ENCODE measurements at regions of chr5 and their contacts with region 1.

Region 1: DNA sequence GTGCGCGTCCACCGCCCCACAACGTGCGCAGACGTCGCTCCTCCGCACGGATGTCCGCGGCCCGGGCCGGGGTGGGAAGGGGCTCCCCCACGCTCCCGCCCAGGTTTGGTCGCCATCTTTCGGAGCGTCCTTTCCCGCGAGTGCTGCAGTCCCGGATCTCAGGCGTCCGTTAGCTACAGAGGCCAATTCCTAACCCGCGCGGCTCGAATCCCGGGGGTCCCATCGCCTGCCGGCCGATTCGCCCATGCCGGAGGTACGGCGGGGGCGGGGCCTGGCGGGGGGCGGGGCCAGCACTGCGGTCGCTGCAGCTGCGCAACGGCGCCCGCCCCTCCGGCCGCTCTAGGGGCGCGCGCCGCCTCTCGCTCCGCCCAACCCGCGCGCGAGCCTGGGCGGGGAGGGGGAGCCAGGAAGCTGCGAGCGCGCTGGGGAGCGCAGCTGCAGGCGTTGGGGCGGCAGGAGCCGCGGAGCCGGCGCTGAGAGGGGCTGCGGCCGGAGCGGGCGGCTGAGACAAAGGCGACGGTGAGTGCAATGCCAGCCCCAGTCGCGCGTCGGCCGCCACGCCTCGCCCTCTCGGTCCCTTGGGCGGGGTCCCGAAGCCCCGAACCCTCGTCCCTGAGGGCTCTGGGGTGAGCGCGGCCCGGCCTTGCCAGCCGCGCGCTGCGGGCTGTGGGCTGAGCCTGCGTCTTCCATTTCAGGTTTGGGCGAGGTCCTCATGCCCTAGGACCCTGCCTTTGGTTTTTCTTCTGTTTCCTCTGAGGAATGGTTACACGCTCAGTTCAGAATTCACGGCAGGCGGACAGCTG is at the start of gene CDC42SE2:
- DNase-seq: peak; percentile 84 to 92 (median 88)
- ATAC-seq: peak; percentile 95 to 100 (median 99)
- H3K4me3 ChIP-seq: peak within 1 kb of the TSS; percentile 85 to 100 (median 94)
- H3K27ac ChIP-seq: peak within 1 kb of the TSS; percentile 10 to 95 (median 87)
- H3K4me1 ChIP-seq: peaks cover 0 to 58% (median 9%) of the 10 kb centered on the region in 12 donors
- H3K27me3 ChIP-seq: no peaks in the 10 kb centered on the region
- CTCF ChIP-seq: no peak
- POLR2A ChIP-seq: peak; percentile 16 to 95
- total RNA-seq, gene CDC42SE2: 9.8 to 29.2 (median 12.4) TPM

Region 2: GRCh38 chr5:129904102-129904666 is 1359.7 kb before region 1 on chr5 and contains the start of gene CHSY3:
- intact Hi-C with region 1: loop called in 1 of 10 experiments (anchors 10 kb)
- DNase-seq: peak; percentile 83 to 91 (median 84)
- ATAC-seq: peak; percentile 80 to 97 (median 94)
- H3K4me3 ChIP-seq: peak within 1 kb of the TSS; percentile 64 to 85 (median 72)
- H3K27ac ChIP-seq: peak within 1 kb of the TSS; percentile 29 to 89 (median 73)
- H3K4me1 ChIP-seq: peaks cover 0 to 33% (median 12%) of the 10 kb centered on the region in 12 donors
- H3K27me3 ChIP-seq: peaks cover 0 to 34% (median 0%) of the 10 kb centered on the region in 9 donors
- CTCF ChIP-seq: peak in 3 of 12 donors; percentile 11 to 30 (median 28)
- POLR2A ChIP-seq: peak in 1 of 2 donors; percentile 8
- total RNA-seq, gene CHSY3: 0.52 to 2.9 (median 1.1) TPM

Region 3: GRCh38 chr5:131165119-131165727 is 98.6 kb before region 1 on chr5 and contains the start of gene HINT1:
- intact Hi-C with region 1: loop called in 8 of 10 experiments (anchors 2 to 10 kb)
- DNase-seq: peak; percentile 92 to 97 (median 93)
- ATAC-seq: peak; percentile 92 to 98 (median 96)
- H3K4me3 ChIP-seq: peak within 1 kb of the TSS; percentile 72 to 97 (median 88)
- H3K27ac ChIP-seq: peak within 1 kb of the TSS; percentile 83 to 98 (median 94)
- H3K4me1 ChIP-seq: peaks cover 0 to 29% (median 16%) of the 10 kb centered on the region in 12 donors
- H3K27me3 ChIP-seq: no peaks in the 10 kb centered on the region
- CTCF ChIP-seq: peak in 3 of 12 donors; percentile 23 to 45 (median 37)
- POLR2A ChIP-seq: peak in 1 of 2 donors; percentile 56
- total RNA-seq, gene HINT1: 76.8 to 165 (median 148) TPM

Region 4: GRCh38 chr5:131170540-131171275 is 93.1 kb before region 1 on chr5 and contains the start of gene LYRM7:
- intact Hi-C with region 1: loop called in 8 of 10 experiments (anchors 2 to 10 kb)
- DNase-seq: peak; percentile 93 to 98 (median 97)
- ATAC-seq: peak; percentile 98 to 99 (median 99)
- H3K4me3 ChIP-seq: peak within 1 kb of the TSS; percentile 45 to 78 (median 68)
- H3K27ac ChIP-seq: peak within 1 kb of the TSS; percentile 5 to 89 (median 83)
- H3K4me1 ChIP-seq: peaks cover 0 to 23% (median 19%) of the 10 kb centered on the region in 12 donors
- H3K27me3 ChIP-seq: no peaks in the 10 kb centered on the region
- CTCF ChIP-seq: peak in 1 of 12 donors; percentile 13
- POLR2A ChIP-seq: peak; percentile 58 to 79
- total RNA-seq, gene LYRM7: 11.8 to 27.1 (median 20.3) TPM

Region 5: GRCh38 chr5:131209506-131210150 is 54.2 kb before region 1 on chr5:
- intact Hi-C with region 1: no loop called
- DNase-seq: no peak
- ATAC-seq: peak in 2 of 4 donors; percentile 42 to 63
- H3K4me3 ChIP-seq: no peak overlapping the region
- H3K27ac ChIP-seq: peak overlapping the region in 1 of 12 donors; percentile 77
- H3K4me1 ChIP-seq: peaks cover 0 to 23% (median 0%) of the 10 kb centered on the region in 12 donors
- H3K27me3 ChIP-seq: no peaks in the 10 kb centered on the region
- CTCF ChIP-seq: no peak
- POLR2A ChIP-seq: no peak

Region 6: DNA sequence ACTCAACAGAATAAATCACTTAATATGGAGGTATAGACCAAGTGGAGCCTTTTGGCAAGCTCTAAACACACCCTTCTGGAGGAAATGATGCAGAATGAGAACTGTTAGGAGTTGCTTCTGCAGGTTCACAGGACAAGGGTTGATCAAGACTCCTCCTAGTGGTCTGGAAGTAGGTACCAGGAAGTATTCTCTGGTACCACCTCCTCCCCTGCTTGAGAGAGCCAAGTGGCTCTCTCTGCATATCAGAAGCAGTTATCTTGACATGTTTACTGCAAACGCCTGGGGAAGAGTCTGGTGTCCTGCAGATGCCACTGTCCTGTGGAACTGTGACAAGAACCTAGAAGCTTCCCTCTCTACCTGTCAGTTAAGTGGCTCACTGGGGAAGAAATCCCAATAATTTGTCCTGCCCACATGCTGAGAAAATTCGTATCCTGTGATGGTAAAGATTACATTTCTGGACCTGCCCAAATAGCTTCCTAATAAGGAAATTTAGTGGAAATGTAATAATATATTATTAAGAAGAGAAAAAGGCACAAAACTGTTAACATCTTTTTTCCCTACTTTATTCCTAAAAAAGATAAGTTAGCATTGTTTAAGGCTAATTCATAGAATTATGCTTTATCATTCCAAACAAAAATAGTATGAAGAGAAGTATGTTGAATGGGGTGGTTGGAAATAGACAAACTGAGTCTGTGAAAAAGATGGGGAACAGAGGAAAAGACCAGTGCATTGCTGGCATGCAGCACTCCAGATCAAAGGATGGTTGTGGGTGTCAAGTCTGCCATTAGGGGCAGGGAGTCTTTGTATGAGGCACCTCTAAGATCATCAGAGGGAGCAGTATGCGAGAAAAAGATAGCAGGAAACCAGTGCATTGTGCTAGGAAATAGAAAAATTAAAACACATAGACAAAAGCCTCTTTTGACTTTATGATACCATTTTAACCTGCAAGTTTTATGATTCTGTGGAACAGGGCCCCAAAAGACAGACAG is 118.9 kb after region 1 on chr5:
- intact Hi-C with region 1: loop called in 4 of 10 experiments (anchors 5 to 10 kb)
- DNase-seq: no peak
- ATAC-seq: peak in 3 of 4 donors; percentile 53 to 76 (median 57)
- H3K4me3 ChIP-seq: no peak overlapping the region
- H3K27ac ChIP-seq: peak overlapping the region in 1 of 12 donors; percentile 92
- H3K4me1 ChIP-seq: peaks cover 0 to 77% (median 13%) of the 10 kb centered on the region in 12 donors
- H3K27me3 ChIP-seq: no peaks in the 10 kb centered on the region
- CTCF ChIP-seq: peak in 11 of 12 donors; percentile 5 to 46 (median 32)
- POLR2A ChIP-seq: no peak

Region 7: DNA sequence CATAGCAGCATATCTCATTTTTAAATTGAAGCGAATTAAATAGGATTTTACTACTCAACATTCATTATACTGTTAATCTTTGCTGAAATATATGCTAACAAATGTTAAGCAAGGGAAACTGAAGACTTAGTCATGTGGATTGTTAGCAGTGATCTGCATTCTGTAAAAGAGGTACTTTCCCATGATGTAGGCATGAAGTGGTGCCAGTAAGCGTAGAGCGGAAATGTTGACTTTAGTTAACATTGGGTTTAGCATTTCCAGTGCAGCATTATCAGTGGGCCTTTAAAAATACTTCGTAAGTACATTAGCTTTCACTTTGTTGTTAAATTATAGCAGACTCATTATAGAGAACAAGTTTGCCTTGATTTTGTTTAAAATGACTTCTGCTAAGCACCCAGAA is 130.3 kb after region 1 on chr5:
- intact Hi-C with region 1: loop called in 3 of 10 experiments (anchors 10 kb)
- DNase-seq: no peak
- ATAC-seq: peak in 1 of 4 donors; percentile 62
- H3K4me3 ChIP-seq: no peak overlapping the region
- H3K27ac ChIP-seq: peak overlapping the region in 1 of 12 donors; percentile 59
- H3K4me1 ChIP-seq: peaks cover 0 to 14% (median 3%) of the 10 kb centered on the region in 12 donors
- H3K27me3 ChIP-seq: no peaks in the 10 kb centered on the region
- CTCF ChIP-seq: no peak
- POLR2A ChIP-seq: no peak

Region 8: GRCh38 chr5:131634996-131635754 is 371.3 kb after region 1 on chr5 and contains the start of gene RAPGEF6:
- intact Hi-C with region 1: loop called in 1 of 10 experiments (anchors 10 kb)
- DNase-seq: peak; percentile 97 to 99 (median 99)
- ATAC-seq: peak; percentile 95 to 98 (median 96)
- H3K4me3 ChIP-seq: peak within 1 kb of the TSS; percentile 35 to 87 (median 70)
- H3K27ac ChIP-seq: peak within 1 kb of the TSS; percentile 93 to 100 (median 98)
- H3K4me1 ChIP-seq: peaks cover 0 to 48% (median 29%) of the 10 kb centered on the region in 12 donors
- H3K27me3 ChIP-seq: no peaks in the 10 kb centered on the region
- CTCF ChIP-seq: peak in 2 of 12 donors; percentile 15 to 16
- POLR2A ChIP-seq: peak in 1 of 2 donors; percentile 66
- total RNA-seq, gene RAPGEF6: 7.0 to 13.9 (median 10.0) TPM

Measured in heart left ventricle (tissue), 16 donors.